ENCODE measurements at regions of chr14 and their contacts with region 1.

Region 1: GRCh38 chr14:94779713-94780112 is 9.8 kb upstream of the GSC start:
- DNase-seq: no peak
- H3K4me3 ChIP-seq: no peak overlapping the region
- H3K27ac ChIP-seq: no peak overlapping the region
- H3K4me1 ChIP-seq: no peaks in the 10 kb centered on the region
- H3K27me3 ChIP-seq: peaks cover 17% of the 10 kb centered on the region
- CTCF ChIP-seq: no peak

Region 2: GRCh38 chr14:94337274-94337673 is 442.4 kb before region 1 on chr14:
- CTCF ChIA-PET with region 1: no interaction called
- POLR2A ChIA-PET with region 1: no interaction called
- intact Hi-C with region 1: no loop called
- DNase-seq: no peak
- H3K4me3 ChIP-seq: no peak overlapping the region
- H3K27ac ChIP-seq: no peak overlapping the region
- H3K4me1 ChIP-seq: no peaks in the 10 kb centered on the region
- H3K27me3 ChIP-seq: no peaks in the 10 kb centered on the region
- CTCF ChIP-seq: no peak

Region 3: GRCh38 chr14:96049932-96050331 is 1270.2 kb after region 1 on chr14:
- CTCF ChIA-PET with region 1: interaction called, 10 read pairs
- POLR2A ChIA-PET with region 1: no interaction called
- intact Hi-C with region 1: no loop called
- DNase-seq: no peak
- H3K4me3 ChIP-seq: no peak overlapping the region
- H3K27ac ChIP-seq: no peak overlapping the region
- H3K4me1 ChIP-seq: no peaks in the 10 kb centered on the region
- H3K27me3 ChIP-seq: peaks cover 31% of the 10 kb centered on the region
- CTCF ChIP-seq: no peak

Measured in PC-9 (cell line).